ENCODE measurements at regions of chr11 and their contacts with region 1.

Region 1: DNA sequence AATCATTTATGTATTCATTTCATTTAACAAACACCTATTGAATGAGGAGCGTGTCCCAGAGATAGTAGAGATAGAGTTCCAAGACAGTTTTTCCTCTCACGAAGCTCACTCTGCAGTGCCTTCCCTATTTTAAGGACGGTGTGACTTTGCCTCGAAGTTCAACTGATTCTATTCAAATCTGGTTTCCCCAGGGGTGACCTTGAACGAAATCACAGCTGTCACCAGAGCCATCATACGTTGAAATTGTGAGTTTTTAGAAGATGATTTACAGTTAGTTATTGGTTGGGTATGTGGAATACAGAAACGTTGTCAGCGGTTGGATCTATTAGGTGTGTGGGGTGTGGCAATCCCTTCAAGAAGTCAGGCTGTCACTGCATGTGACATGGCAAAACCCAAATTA is 33.9 kb upstream of the SESN3 start:
- DNase-seq: no peak
- ATAC-seq: no peak
- H3K4me3 ChIP-seq: no peak overlapping the region
- H3K4me3 Mint-ChIP-seq: no peak overlapping the region
- H3K27ac ChIP-seq: no peak overlapping the region
- H3K27ac Mint-ChIP-seq: no peak overlapping the region
- H3K4me1 ChIP-seq: no peaks in the 10 kb centered on the region
- H3K4me1 Mint-ChIP-seq: peaks cover 11% of the 10 kb centered on the region
- H3K27me3 ChIP-seq: no peaks in the 10 kb centered on the region
- H3K27me3 Mint-ChIP-seq: no peaks in the 10 kb centered on the region
- CTCF ChIP-seq: no peak

Region 2: DNA sequence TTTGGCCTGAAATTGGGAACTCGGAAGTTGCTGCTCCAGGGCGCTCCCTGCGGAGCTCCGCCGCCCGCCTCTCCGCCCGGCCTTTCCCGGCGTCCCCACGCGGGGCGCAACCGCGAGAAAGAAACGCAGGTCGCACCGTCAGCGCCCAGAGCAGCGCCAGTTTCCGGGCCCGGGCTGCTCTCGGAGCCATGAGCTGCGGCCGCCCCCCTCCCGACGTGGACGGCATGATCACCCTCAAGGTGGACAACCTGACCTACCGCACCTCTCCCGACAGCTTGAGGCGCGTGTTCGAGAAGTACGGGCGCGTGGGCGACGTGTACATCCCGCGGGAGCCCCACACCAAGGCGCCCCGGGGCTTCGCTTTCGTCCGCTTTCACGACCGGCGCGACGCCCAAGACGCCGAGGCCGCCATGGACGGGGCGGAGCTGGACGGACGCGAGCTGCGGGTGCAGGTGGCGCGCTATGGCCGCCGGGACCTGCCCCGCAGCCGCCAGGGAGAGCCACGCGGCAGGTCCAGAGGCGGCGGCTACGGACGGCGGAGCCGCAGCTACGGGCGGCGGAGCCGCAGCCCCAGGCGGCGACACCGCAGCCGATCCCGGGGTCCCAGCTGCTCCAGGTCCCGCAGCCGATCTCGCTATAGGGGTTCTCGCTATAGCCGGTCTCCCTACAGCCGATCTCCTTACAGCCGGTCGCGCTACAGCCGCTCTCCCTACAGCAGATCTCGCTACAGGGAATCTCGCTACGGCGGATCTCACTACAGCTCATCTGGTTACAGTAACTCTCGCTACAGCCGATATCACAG is 197.6 kb before region 1 on chr11:
- CTCF ChIA-PET with region 1: no interaction called
- POLR2A ChIA-PET with region 1: no interaction called
- intact Hi-C with region 1: no loop called
- DNase-seq: peak; percentile 53 to 88 (median 69)
- ATAC-seq: peak; percentile 63
- H3K4me3 ChIP-seq: peak overlapping the region; percentile 95
- H3K4me3 Mint-ChIP-seq: peak overlapping the region; percentile 98
- H3K27ac ChIP-seq: peak overlapping the region; percentile 87 to 90
- H3K27ac Mint-ChIP-seq: peak overlapping the region; percentile 99
- H3K4me1 ChIP-seq: peaks cover 12% of the 10 kb centered on the region
- H3K4me1 Mint-ChIP-seq: peaks cover 38% of the 10 kb centered on the region
- H3K27me3 ChIP-seq: no peaks in the 10 kb centered on the region
- H3K27me3 Mint-ChIP-seq: no peaks in the 10 kb centered on the region
- CTCF ChIP-seq: peak; percentile 60

Region 3: GRCh38 chr11:95248666-95249467 is 16.0 kb before region 1 on chr11:
- CTCF ChIA-PET with region 1: no interaction called
- POLR2A ChIA-PET with region 1: no interaction called
- intact Hi-C with region 1: loop called in 1 of 2 experiments (anchors 2 kb)
- DNase-seq: no peak
- ATAC-seq: no peak
- H3K4me3 ChIP-seq: no peak overlapping the region
- H3K4me3 Mint-ChIP-seq: no peak overlapping the region
- H3K27ac ChIP-seq: no peak overlapping the region
- H3K27ac Mint-ChIP-seq: no peak overlapping the region
- H3K4me1 ChIP-seq: peaks cover 4% of the 10 kb centered on the region
- H3K4me1 Mint-ChIP-seq: peaks cover 16% of the 10 kb centered on the region
- H3K27me3 ChIP-seq: no peaks in the 10 kb centered on the region
- H3K27me3 Mint-ChIP-seq: no peaks in the 10 kb centered on the region
- CTCF ChIP-seq: no peak

Region 4: DNA sequence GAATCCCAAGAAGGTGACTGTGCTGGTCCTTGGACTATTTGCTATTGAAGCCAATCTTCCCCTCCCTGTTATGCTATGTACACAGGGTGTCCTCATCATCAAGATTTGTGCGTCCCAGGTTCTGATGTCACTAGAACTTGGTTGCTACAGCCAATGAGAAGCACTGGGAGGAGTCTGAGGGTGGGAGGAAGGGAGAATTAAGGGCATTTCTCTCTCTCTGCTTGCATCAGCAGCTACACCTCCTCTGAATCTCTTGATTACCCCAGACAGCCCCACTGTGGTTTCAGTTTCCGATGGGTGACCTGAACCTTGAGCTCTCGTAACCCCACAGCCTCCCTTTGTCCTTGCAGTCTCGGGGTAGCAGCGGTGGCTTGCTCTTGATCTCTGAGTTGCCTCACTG is 178.5 kb after region 1 on chr11:
- CTCF ChIA-PET with region 1: no interaction called
- POLR2A ChIA-PET with region 1: no interaction called
- intact Hi-C with region 1: no loop called
- DNase-seq: peak in 6 of 14 experiments; percentile 4 to 49 (median 30)
- ATAC-seq: peak; percentile 79
- H3K4me3 ChIP-seq: no peak overlapping the region
- H3K4me3 Mint-ChIP-seq: no peak overlapping the region
- H3K27ac ChIP-seq: no peak overlapping the region
- H3K27ac Mint-ChIP-seq: no peak overlapping the region
- H3K4me1 ChIP-seq: peaks cover 10% of the 10 kb centered on the region
- H3K4me1 Mint-ChIP-seq: peaks cover 10% of the 10 kb centered on the region
- H3K27me3 ChIP-seq: no peaks in the 10 kb centered on the region
- H3K27me3 Mint-ChIP-seq: no peaks in the 10 kb centered on the region
- CTCF ChIP-seq: no peak